ENCODE measurements at regions of chr18 and their contacts with region 1.

Region 1: DNA sequence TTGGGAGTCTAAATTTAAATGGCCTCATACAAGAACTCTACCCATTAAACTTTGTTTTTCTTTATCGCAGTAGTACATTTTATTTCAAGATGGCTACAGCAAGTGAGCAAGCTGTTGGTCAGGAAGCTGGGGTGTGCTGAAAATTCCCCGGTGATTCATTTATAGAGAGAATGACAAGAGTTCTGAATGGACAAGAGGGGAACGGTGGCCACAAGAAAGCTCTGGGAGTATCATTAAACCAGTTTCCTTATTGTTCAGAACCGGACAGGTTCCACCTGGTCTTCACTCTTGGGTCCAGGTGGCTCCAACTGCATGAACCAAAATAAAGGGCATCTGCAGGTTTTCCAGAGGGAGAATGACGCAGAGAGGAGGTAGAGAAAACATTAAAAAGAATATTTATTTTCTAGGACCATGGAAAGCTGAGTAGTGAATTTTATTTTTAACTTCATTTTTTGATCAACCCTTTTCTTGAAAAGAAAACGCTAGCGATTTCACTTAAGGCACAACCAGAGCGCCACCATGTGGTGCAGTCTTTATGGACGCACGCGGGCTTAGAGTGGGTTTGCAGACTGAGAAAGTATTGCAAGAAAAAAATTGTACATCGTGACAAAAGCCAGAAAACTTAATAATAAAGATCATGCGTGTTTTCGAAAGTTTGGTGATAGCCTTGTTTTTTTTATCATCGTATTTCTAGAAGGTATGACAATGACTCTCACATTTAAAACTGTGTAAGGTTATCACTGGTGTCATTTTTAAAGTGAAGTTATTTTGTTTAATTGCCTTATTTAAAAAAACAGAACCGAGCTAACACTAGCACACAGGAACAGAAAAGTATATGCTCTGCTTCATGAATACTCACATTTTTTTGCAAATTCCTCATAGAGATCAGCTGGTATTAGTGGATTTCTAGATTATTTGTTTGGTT is 97.9 kb upstream of the NOL4 start:
- DNase-seq: peak; percentile 47 to 90 (median 79)

Region 2: DNA sequence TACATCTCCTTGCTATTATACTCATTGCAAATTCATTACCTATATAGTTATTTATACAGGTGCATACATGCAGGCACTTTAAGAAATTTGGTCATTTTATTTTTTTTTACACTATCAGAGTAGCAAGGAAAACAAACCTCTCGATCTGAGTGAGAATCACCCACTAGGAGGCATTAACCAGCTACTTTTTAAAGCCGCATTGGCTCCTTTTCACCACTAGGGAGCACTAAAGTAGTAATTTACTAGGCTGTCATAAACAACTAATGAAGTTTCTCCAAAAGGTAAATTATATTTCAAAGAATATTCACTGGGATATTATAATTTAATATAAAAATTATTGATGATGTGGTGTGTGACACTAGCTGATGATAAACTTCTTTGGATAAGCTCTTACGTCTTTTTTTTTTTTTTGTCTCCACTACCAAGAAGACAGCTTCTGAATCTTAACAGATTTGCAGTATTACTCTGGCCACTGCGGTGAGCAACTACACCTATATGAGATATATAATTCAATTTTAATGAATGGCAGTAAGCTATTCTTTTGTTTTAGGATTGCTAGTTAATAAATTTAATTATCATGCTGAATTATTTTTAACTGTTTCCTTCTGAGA is 199.8 kb before region 1 on chr18:
- intact Hi-C with region 1: loop called (anchors 5 kb)
- DNase-seq: peak in 31 of 42 donors; percentile 2 to 84 (median 46)